ENCODE measurements at regions of chr6 and their contacts with region 1.

Region 1: GRCh38 chr6:111805511-111806164 is 67.6 kb downstream of the FYN start:
- DNase-seq: peak; percentile 24 to 84
- H3K4me3 ChIP-seq: peak overlapping the region; percentile 28; the same call in 1 of the 2 replicates
- H3K27ac ChIP-seq: peak overlapping the region; percentile 79
- H3K4me1 ChIP-seq: peaks cover 62% of the 10 kb centered on the region
- H3K27me3 ChIP-seq: no peaks in the 10 kb centered on the region
- CTCF ChIP-seq: no peak

Region 2: DNA sequence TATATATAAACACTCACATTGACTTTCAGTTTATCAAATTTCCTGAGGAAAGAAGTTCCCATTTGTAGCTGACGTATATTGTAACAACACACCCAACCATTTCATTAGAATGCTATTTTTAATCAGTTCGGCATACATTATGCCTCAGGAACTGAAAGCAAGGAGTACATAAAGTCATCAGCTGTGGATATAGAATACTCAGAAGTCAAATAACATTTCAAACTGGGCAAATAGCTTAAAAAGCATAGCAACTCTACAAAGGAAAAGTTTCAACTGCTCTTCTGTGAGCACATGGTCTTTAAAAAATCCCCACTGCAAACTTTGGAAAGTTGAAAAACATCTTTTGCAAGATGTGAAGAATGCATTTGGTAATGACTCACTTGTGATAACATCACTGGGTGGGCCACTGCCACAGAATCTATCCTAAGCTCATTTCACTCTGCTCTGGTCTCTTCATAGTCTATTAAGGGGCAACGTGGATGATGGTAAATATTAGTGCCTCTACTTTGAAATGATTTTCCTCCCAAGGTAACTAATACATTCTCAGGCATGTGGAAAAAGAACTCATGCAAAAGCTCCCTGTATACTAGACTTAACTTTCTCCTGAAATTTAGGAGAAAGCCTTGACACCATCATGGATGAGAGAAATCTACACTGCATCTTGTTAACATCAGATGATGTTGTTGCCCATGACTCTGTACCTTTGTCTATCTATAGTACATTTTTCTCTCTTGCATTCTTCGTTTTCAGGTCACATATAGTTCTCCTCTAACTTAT is 18.4 kb after region 1 on chr6:
- CTCF ChIA-PET with region 1: no interaction called
- POLR2A ChIA-PET with region 1: no interaction called
- intact Hi-C with region 1: loop called (anchors 2 kb)
- DNase-seq: peak in 1 of 2 experiments; percentile 83
- H3K4me3 ChIP-seq: peak overlapping the region; percentile 6; the same call in 1 of the 2 replicates
- H3K27ac ChIP-seq: peak overlapping the region; percentile 78
- H3K4me1 ChIP-seq: peaks cover 33% of the 10 kb centered on the region
- H3K27me3 ChIP-seq: no peaks in the 10 kb centered on the region
- CTCF ChIP-seq: no peak